ENCODE measurements at regions of chr13 and their contacts with region 1.

Region 1: GRCh38 chr13:99269627-99270241 is 11.6 kb upstream of the GPR18 start:
- DNase-seq: peak; percentile 38
- ATAC-seq: peak; percentile 60
- H3K4me3 Mint-ChIP-seq: no peak overlapping the region
- H3K27ac Mint-ChIP-seq: peak overlapping the region; percentile 69
- H3K4me1 Mint-ChIP-seq: peaks cover 65% of the 10 kb centered on the region
- H3K27me3 Mint-ChIP-seq: no peaks in the 10 kb centered on the region
- CTCF ChIP-seq: peak; percentile 85

Region 2: DNA sequence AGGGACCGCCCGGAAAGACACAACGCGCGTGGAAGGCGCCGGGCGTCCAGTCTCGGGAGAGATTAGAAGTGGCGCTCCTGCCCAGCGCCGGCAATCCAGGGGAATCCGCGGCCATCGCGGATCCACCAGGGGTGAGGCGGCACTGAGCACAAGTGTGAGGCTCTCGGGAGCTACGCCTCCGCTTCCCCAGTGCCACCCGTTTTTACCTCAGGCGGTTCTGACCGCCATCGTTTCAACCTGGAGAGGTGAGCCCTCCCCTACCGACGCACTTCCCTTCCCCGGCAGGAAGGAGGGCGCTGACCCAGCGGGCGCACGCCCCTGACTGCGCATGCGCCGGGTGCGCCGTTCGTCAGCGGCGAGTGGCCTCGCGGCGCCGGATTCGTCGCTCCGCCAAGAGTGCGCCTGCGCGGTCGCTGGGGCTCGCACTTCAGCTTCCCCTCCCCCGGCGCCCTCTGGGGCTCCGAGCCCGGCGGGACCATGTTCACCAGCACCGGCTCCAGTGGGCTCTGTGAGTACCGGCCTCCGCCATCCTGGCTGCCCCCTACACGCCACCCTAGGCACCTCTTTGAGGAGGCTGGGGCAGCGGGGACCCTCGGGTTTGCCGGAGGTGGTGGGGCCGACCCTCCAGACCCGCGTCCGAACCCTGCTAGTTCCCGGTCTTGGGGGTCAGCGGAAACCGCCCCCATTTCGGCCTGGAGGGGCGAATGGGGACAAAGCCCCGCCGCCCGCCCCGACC is 69.1 kb before region 1 on chr13 and contains the start of gene UBAC2:
- CTCF ChIA-PET with region 1: interaction called, 168 read pairs
- POLR2A ChIA-PET with region 1: interaction called, 14 read pairs
- intact Hi-C with region 1: no loop called
- DNase-seq: peak; percentile 95
- ATAC-seq: peak; percentile 79
- H3K4me3 Mint-ChIP-seq: peak within 1 kb of the TSS; percentile 92
- H3K27ac Mint-ChIP-seq: peak within 1 kb of the TSS; percentile 94
- H3K4me1 Mint-ChIP-seq: peaks cover 62% of the 10 kb centered on the region
- H3K27me3 Mint-ChIP-seq: no peaks in the 10 kb centered on the region
- CTCF ChIP-seq: no peak
- total RNA-seq, gene UBAC2: 63.7 to 68.4 TPM

Region 3: DNA sequence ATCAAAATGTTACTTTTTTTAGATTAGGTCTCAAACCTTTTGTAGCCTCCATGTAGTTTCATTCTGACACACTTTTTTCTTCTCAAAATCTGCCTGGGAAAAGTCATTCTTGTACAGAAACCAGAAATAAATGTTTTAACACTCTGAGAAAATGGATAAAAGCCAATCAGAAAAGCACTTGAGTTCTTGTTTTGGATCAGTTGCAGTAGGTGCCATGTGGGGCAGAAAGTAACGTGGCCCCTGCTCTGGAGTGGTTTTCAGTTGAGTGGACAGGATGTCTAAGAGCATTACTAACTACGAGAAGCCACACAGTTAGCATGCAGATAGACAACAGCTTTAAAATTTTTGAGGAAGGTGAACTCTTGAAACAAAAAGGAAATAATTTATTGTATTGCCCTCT is 18.4 kb after region 1 on chr13:
- CTCF ChIA-PET with region 1: interaction called, 39 read pairs
- POLR2A ChIA-PET with region 1: interaction called, 3 read pairs
- intact Hi-C with region 1: no loop called
- DNase-seq: peak; percentile 88
- ATAC-seq: peak; percentile 85
- H3K4me3 Mint-ChIP-seq: peak overlapping the region; percentile 49
- H3K27ac Mint-ChIP-seq: peak overlapping the region; percentile 85
- H3K4me1 Mint-ChIP-seq: peaks cover 74% of the 10 kb centered on the region
- H3K27me3 Mint-ChIP-seq: no peaks in the 10 kb centered on the region
- CTCF ChIP-seq: no peak

Region 4: DNA sequence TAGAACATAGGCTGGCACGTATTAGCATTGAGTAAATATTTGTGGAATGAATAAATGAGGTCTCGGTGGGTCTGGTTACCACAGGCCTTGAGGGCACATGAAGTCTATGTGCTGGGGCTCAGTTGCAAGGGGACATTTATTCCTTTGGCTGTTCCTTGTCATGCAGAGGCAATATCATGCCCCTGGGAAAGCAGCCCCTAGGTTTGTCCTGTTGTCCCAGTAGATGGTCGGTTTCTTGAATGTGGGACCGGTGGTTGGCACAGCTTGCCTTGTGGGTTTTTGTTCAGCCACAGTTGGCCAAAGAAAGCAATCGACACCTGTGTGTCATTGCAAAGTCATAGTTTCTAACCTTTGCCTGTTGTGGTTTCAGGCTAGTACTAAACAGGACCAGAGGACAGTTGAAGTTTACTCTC is 62.2 kb after region 1 on chr13:
- CTCF ChIA-PET with region 1: interaction called, 20 read pairs
- POLR2A ChIA-PET with region 1: no interaction called
- intact Hi-C with region 1: no loop called
- DNase-seq: peak; percentile 57
- ATAC-seq: peak; percentile 80
- H3K4me3 Mint-ChIP-seq: no peak overlapping the region
- H3K27ac Mint-ChIP-seq: peak overlapping the region; percentile 60
- H3K4me1 Mint-ChIP-seq: peaks cover 68% of the 10 kb centered on the region
- H3K27me3 Mint-ChIP-seq: no peaks in the 10 kb centered on the region
- CTCF ChIP-seq: no peak

Region 5: GRCh38 chr13:99374994-99375737 is 105.4 kb after region 1 on chr13:
- CTCF ChIA-PET with region 1: interaction called, 280 read pairs
- POLR2A ChIA-PET with region 1: no interaction called
- intact Hi-C with region 1: no loop called
- DNase-seq: peak; percentile 42
- ATAC-seq: peak; percentile 41
- H3K4me3 Mint-ChIP-seq: no peak overlapping the region
- H3K27ac Mint-ChIP-seq: peak overlapping the region; percentile 81
- H3K4me1 Mint-ChIP-seq: peaks cover 86% of the 10 kb centered on the region
- H3K27me3 Mint-ChIP-seq: no peaks in the 10 kb centered on the region
- CTCF ChIP-seq: no peak

Region 6: DNA sequence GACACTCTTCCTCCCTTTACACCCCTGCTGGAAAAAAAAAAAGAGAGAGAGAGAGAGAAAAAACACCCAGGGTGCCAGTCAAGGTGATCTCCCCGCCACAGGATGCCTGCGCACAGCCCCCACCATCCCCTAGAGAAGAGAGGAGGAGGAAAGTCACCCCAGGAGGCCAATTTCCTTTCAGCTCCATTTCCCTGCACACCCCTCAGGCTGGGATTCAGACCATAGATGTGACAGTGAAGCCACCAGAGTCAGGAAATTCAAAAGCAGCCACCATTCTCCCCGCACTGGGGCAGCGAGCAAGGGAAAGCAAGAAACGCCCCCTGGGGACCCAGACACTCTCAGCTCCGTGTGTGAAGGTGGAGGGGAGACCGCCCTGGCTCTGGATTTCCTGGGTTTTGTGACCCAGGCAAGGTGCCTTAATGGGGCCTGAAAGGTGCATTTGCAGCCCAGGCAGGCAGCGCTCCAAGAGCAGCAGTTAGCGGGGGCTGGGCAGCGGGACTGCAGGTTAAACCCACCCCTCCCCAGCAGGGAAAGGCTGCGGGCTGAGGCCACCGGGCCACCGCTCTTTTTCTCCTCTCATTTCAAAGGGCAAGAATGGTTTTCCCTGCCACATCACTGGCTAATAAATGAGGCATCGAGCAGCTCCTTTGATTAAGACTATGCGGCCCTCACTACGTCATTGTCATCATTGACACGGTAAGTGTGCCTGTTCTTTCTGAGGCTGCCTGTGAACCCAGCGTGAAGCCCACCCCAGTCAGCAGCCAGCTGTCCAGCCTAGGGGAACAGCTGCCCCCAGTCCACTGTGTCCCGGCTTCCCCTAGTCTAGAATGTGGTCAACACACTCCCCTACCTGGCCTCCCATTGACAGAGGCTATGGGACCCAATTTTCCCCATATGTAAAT is 147.7 kb after region 1 on chr13:
- CTCF ChIA-PET with region 1: interaction called, 18 read pairs
- POLR2A ChIA-PET with region 1: interaction called, 3 read pairs
- intact Hi-C with region 1: no loop called
- DNase-seq: peak; percentile 55
- ATAC-seq: no peak
- H3K4me3 Mint-ChIP-seq: no peak overlapping the region
- H3K27ac Mint-ChIP-seq: no peak overlapping the region
- H3K4me1 Mint-ChIP-seq: peaks cover 64% of the 10 kb centered on the region
- H3K27me3 Mint-ChIP-seq: no peaks in the 10 kb centered on the region
- CTCF ChIP-seq: no peak

Region 7: GRCh38 chr13:99656092-99656745 is 386.5 kb after region 1 on chr13:
- CTCF ChIA-PET with region 1: no interaction called
- POLR2A ChIA-PET with region 1: no interaction called
- intact Hi-C with region 1: no loop called
- DNase-seq: peak; percentile 90
- ATAC-seq: peak; percentile 72
- H3K4me3 Mint-ChIP-seq: peak overlapping the region; percentile 42
- H3K27ac Mint-ChIP-seq: peak overlapping the region; percentile 32
- H3K4me1 Mint-ChIP-seq: peaks cover 44% of the 10 kb centered on the region
- H3K27me3 Mint-ChIP-seq: no peaks in the 10 kb centered on the region
- CTCF ChIP-seq: peak; percentile 92